GM10248 (cell line): ENCODE measurements at regions of chr7 and their contacts with region 1.

Region 1: GRCh38 chr7:28835800-28836199 is 122.3 kb downstream of the TRIL start:
- DNase-seq: no peak
- CTCF ChIP-seq: no peak

Region 2: GRCh38 chr7:28823582-28823981 is 12.2 kb before region 1 on chr7:
- CTCF ChIA-PET with region 1: interaction called, 15 read pairs
- POLR2A ChIA-PET with region 1: interaction called, 4 read pairs
- DNase-seq: no peak
- CTCF ChIP-seq: no peak